ENCODE measurements at regions of chr5 and their contacts with region 1.

Region 1: DNA sequence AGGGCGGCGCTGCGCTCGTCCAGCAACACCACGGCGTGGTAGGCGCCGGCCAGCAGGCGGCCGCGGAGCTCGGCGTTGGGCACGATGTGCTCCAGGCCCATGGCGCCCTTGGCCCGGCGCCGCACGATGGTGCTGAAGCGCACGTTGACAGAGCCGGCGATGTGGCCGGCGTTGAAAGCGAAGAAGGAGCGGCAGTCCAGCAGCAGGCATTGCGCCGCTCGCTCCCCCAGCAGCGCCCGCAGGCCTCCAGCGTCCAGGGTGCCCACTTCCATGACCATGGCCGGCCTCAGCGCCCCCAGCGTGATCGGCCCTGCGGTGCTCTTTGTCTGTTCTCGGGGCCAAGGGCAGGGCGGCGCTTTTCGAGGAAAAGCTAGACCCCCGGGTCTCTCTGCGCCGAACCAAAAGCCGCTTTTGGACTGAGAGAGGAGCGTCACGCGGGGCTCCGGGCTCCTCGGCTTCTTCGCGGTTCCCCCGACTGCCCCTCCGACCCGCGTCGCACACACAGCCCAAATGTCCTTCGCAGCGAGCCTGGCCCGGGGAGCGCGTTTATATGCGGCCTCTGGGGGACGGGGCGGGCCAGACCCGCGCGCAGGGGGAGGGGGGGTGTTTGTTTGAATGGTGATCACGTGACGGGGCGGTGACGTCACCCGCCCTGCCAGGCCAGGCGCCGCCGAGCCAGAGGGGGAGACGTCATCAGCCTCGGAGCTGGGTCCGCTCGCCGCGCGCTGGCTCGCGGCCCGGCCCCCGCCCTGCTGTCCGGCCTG is at the start of gene DUSP1:
- DNase-seq: peak; percentile 99
- H3K4me3 ChIP-seq: peak within 1 kb of the TSS; percentile 76 to 92
- H3K27ac ChIP-seq: peak within 1 kb of the TSS; percentile 98 to 100
- H3K4me1 ChIP-seq: peaks cover 17% of the 10 kb centered on the region
- H3K27me3 ChIP-seq: no peaks in the 10 kb centered on the region
- CTCF ChIP-seq: peak in 2 of 4 experiments; percentile 63 to 64
- POLR2A ChIP-seq: peak; percentile 99
- total RNA-seq, gene DUSP1: 559 to 659 TPM

Region 2: GRCh38 chr5:172868924-172869591 is 98.2 kb after region 1 on chr5:
- intact Hi-C with region 1: loop called (anchors 2 kb)
- DNase-seq: peak; percentile 88
- H3K4me3 ChIP-seq: no peak overlapping the region
- H3K27ac ChIP-seq: peak overlapping the region; percentile 79 to 80
- H3K4me1 ChIP-seq: peaks cover 38% of the 10 kb centered on the region
- H3K27me3 ChIP-seq: no peaks in the 10 kb centered on the region
- CTCF ChIP-seq: peak in 2 of 4 experiments; percentile 44
- POLR2A ChIP-seq: no peak

Measured in prostate gland (tissue), 2 donors.